ENCODE measurements at regions of chr16 and their contacts with region 1.

Region 1: GRCh38 chr16:75402821-75403475 is 30.4 kb downstream of the CFDP1 start:
- DNase-seq: peak; percentile 74
- H3K4me3 ChIP-seq: no peak overlapping the region
- H3K27ac ChIP-seq: peak overlapping the region; percentile 89
- H3K4me1 ChIP-seq: peaks cover 13% of the 10 kb centered on the region
- H3K27me3 ChIP-seq: no peaks in the 10 kb centered on the region
- CTCF ChIP-seq: peak; percentile 41 to 42
- POLR2A ChIP-seq: no peak

Region 2: GRCh38 chr16:75238132-75238852 is 164.7 kb before region 1 on chr16:
- CTCF ChIA-PET with region 1: interaction called, 84 read pairs
- POLR2A ChIA-PET with region 1: no interaction called
- dilution Hi-C with region 1: no loop called
- intact Hi-C with region 1: loop called (anchors 1 kb)
- DNase-seq: no peak
- H3K4me3 ChIP-seq: no peak overlapping the region
- H3K27ac ChIP-seq: peak overlapping the region; percentile 48
- H3K4me1 ChIP-seq: peaks cover 10% of the 10 kb centered on the region
- H3K27me3 ChIP-seq: no peaks in the 10 kb centered on the region
- CTCF ChIP-seq: no peak
- POLR2A ChIP-seq: no peak

Region 3: DNA sequence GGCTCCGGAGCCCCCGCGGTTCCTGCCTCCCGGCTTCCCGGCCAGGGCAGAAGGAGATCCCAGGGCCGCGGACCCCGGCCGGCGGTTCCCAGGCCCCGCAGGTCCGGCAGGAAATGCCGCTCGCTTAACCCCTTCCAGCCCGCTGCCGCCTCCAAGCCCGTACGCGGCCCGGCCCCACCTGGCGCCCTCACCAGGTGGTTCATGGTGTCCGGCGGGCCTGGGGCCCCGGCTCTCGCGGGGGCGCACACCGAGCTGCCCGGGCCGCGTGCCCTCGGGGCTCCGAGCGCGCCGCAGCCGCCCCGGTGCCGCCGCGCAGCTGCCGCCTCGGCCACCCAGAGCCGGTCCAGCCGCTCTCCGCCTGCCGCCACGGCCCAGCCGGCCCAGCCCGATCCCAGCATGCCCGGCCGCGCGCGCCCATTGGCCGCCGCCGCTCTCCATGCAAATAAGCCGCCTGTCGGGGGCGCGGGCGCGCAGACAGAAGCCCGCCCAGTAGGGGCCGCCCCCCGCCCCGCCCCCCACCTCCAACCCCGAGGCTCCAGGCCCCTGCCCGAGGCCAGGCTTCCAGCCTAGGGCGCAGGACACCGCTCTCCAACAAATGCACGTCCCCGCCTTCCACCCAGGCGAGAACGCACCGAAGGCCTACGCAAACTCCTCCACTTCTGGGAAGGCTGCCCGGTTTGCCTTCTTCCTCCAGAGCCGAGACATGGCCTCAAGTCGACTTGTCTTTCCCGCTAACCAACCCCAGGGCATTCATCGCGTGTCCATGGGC is 151.5 kb before region 1 on chr16 and contains the start of gene BCAR1:
- CTCF ChIA-PET with region 1: interaction called, 13 read pairs
- POLR2A ChIA-PET with region 1: no interaction called
- dilution Hi-C with region 1: no loop called
- intact Hi-C with region 1: no loop called
- DNase-seq: peak; percentile 89
- H3K4me3 ChIP-seq: peak within 1 kb of the TSS; percentile 50 to 83 (median 80)
- H3K27ac ChIP-seq: peak within 1 kb of the TSS; percentile 92
- H3K4me1 ChIP-seq: peaks cover 80% of the 10 kb centered on the region
- H3K27me3 ChIP-seq: no peaks in the 10 kb centered on the region
- CTCF ChIP-seq: no peak
- POLR2A ChIP-seq: peak; percentile 73
- total RNA-seq, gene BCAR1: 237 and 267 TPM in 2 replicates

Region 4: DNA sequence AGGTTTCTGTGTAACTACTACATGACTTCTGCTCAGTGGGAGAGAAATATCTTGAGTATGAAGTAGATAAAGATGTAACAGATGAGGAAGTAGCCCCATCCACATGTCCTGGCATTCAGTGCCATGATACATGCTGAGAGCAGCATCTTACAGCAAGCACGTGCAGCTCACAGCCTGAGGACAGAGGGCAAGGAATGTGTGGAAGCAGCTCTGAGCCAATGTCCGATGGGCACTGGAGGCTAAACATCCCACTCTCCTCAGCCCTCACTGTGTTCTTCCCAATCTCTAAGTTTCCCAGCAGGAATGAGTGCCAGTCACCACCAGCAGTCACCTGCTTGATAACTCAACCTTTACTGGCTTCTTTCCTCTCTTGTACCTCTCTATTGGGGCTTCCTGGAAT is 10.0 kb before region 1 on chr16:
- CTCF ChIA-PET with region 1: interaction called, 29 read pairs
- POLR2A ChIA-PET with region 1: no interaction called
- dilution Hi-C with region 1: no loop called
- intact Hi-C with region 1: no loop called
- DNase-seq: no peak
- H3K4me3 ChIP-seq: no peak overlapping the region
- H3K27ac ChIP-seq: no peak overlapping the region
- H3K4me1 ChIP-seq: no peaks in the 10 kb centered on the region
- H3K27me3 ChIP-seq: no peaks in the 10 kb centered on the region
- CTCF ChIP-seq: no peak
- POLR2A ChIP-seq: no peak

Region 5: DNA sequence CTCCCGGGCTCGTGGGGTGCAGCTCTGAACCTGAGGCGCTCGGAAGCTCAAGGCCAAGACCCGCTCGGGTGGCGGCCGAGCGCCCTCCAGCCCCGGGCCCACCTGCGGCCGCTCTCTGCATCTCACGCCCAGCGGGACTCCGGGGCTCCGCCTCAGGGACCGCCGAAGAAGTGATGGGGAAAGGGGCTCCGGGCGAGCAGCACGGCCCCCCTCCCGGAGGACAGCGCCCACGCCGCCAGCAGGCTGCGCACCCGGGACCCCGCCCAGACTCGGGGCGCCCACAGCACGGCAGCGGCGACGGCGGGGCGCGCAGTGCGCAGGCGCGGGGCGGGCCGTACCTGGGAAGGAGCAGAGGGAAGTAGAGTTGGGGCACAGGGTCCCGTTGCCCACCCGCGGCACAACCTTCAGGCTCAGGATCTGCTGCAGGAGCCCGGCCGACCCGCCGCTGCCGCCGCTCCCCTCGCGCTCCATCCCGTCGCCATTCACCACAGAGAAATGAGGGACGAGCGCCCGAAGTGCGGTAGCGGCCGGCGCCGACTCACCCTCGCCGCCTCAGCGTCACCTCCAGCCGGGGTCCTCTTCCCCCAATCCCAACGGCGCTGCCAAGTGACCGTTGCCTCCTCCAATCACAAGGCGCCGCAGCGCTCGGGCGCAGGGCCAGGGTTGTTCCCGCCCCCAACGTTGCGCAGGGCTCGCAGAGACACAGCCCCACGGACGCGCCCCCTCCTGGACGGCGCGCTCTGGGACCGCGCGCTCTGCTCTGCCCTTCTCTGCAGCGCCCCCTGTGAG is 61.4 kb after region 1 on chr16 and contains the start of gene TMEM170A:
- CTCF ChIA-PET with region 1: interaction called, 4 read pairs
- POLR2A ChIA-PET with region 1: no interaction called
- dilution Hi-C with region 1: no loop called
- intact Hi-C with region 1: loop called (anchors 1 kb)
- DNase-seq: peak; percentile 100
- H3K4me3 ChIP-seq: peak within 1 kb of the TSS; percentile 65 to 93 (median 68)
- H3K27ac ChIP-seq: peak within 1 kb of the TSS; percentile 74
- H3K4me1 ChIP-seq: peaks cover 10% of the 10 kb centered on the region
- H3K27me3 ChIP-seq: no peaks in the 10 kb centered on the region
- CTCF ChIP-seq: peak; percentile 100
- POLR2A ChIP-seq: peak; percentile 98
- total RNA-seq, gene TMEM170A: 22.2 and 24.2 TPM in 2 replicates

Region 6: DNA sequence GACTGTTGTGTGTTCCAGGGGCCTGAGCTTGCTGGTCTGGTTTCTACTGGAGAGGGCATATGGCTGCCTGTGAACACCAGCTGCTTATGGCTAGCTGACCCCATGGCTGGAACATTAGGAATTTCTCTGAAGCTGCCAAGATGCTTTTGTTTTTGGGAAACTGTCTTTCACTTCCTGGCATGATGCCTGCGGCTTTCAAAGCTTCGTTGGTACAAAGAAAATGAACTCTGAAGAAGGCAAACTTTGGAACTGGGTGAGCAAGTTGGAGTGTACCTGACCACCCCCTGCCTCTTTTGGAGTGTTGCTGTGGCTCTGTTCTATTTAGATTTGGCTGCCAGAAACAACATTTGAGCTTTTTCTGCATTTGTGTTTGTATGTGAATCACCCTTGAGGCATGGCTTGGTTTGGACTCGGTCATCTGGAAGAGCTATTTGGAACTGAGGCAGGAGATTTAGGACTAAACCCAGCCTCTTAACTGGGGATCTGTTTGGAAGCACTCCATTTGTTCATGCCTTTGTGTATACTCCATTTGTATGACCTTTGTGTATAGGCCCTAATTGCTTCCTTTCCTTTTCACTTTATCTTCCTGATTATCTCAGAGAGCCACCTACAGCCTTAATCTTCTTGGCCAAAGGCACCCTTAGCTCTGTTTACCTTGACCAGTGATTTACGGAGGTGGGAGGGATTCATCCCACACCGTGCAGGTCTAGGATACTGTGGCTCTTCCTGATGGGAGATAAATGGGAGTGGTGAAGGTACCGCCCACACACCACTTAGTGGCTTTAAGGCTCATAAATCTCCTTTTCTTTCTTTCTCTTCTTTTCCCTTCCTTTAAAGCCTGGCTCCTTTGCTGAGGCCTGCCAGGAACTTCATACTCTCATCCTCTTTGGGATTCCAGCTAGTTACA is 330.6 kb after region 1 on chr16:
- CTCF ChIA-PET with region 1: no interaction called
- POLR2A ChIA-PET with region 1: no interaction called
- dilution Hi-C with region 1: no loop called
- intact Hi-C with region 1: no loop called
- DNase-seq: no peak
- H3K4me3 ChIP-seq: no peak overlapping the region
- H3K27ac ChIP-seq: no peak overlapping the region
- H3K4me1 ChIP-seq: no peaks in the 10 kb centered on the region
- H3K27me3 ChIP-seq: no peaks in the 10 kb centered on the region
- CTCF ChIP-seq: no peak
- POLR2A ChIP-seq: no peak

Measured in endothelial cell of umbilical vein (primary cell).